Activated B cell treated with CpG ODN at 0.5 μM for 24 hours (primary cell): ENCODE measurements at regions of chr2 and their contacts with region 1.

Region 1: DNA sequence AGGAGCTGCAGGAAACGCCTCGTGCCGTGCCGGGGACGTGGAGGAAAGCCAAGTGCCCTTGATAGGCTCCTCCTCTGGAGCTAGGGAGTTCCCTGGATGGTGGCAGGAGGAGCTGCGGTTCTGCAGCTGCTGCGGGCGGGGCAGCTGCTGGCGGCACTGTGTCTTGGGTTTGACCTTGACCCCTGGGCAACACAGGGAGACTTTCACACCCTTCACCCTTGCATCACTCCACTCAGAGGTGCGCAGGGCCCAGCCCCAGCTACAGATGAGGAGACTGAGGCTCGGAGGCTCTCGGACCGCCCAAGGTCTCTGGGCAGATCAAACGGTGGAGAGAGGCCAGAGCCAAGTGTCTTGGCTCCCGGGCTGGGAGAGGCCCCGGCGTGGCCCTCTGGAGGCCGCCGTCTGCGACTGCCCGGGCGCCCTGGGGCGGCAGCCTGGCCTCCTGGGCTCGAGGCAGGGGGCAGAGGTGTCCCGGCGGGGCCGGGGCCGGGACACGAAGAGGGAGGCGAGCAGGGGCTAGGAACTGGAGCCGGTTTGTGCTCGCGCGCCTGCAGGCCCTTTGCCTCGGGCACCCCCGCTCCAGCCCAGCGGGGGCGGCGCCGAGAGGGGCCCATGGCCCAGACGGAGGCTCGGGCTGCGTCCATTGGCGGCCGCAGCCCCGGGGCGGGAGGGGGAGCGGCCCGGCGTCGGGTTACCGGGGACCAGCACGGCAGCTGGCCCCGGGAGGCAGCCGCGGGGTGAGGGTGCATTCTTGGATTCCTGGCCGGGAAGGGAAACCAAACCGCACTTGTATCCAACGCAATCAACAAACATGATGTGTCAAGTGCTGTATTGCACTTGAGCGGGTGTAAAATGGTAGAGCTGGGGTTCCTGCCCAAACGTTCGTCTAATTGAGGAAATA is 129.6 kb upstream of the SLC1A4 start:
- DNase-seq: peak; percentile 44
- ATAC-seq: peak; percentile 19
- H3K4me3 Mint-ChIP-seq: peak overlapping the region; percentile 76
- H3K27ac Mint-ChIP-seq: peak overlapping the region; percentile 94
- H3K4me1 Mint-ChIP-seq: peaks cover 36% of the 10 kb centered on the region
- H3K27me3 Mint-ChIP-seq: no peaks in the 10 kb centered on the region
- CTCF ChIP-seq: no peak

Region 2: DNA sequence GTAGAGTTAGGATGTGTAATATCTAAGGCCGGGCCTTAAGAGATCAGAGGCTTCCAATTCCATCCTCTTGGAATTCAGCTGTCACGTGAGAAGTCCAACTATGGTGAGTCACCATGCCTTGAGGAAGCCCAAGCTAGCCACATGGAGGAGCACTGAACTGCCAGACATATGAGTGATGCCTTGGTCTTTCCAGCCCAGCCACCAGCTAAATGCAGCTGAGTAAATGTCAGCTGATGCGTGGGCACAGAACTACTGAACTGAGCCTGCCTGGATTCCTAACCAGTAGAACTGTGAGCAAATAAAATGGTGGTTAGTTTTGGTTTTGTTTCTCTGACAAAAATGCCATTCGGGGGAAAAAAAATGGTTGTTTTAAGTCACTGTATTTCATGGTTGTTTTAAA is 52.1 kb before region 1 on chr2:
- CTCF ChIA-PET with region 1: no interaction called
- POLR2A ChIA-PET with region 1: interaction called, 11 read pairs
- intact Hi-C with region 1: no loop called
- DNase-seq: no peak
- ATAC-seq: peak; percentile 47
- H3K4me3 Mint-ChIP-seq: no peak overlapping the region
- H3K27ac Mint-ChIP-seq: no peak overlapping the region
- H3K4me1 Mint-ChIP-seq: peaks cover 14% of the 10 kb centered on the region
- H3K27me3 Mint-ChIP-seq: no peaks in the 10 kb centered on the region
- CTCF ChIP-seq: no peak

Region 3: DNA sequence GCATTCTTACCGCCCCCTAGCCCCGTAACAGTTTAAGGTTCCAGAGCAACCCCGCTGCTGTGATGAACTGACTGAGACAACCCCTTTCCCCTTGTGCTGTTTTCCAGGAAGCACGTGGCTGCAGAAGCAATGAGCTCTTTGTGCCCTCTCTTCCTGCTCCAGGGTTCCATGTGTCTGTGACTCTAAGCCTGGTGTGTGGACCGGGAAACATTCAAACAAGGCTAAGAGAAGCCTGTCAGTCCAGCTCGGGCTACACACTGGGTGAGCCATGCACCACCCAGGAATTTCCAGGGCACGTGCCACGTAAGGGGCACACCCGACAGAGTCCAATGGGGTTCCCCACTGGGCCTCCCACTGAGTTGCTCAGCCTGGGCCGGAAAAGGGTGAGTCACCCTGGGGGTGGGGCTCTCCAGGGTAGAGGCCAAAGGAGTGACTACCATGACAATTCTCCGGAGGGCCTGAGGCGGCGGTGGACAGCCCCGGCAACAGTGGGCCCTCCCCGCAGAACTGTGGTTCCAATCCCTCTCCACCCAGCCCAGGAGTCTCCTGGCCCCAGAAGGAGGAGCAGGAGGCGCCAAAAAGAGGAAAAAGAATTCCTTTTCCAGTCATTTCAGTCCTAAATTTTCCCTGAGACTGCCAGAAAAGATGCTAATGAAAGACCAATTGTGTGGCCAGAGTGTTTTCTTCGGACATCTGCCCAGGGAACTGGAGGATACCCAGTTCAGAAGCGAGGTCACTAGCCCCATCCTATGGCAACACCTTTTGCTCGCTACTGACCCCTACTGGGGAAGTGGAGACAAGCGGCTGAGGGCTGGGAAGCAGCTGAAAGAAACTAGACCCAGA is 28.2 kb before region 1 on chr2:
- CTCF ChIA-PET with region 1: interaction called, 15 read pairs
- POLR2A ChIA-PET with region 1: interaction called, 14 read pairs
- intact Hi-C with region 1: loop called (anchors 1 kb)
- DNase-seq: peak; percentile 75
- ATAC-seq: peak; percentile 96
- H3K4me3 Mint-ChIP-seq: peak overlapping the region; percentile 63
- H3K27ac Mint-ChIP-seq: peak overlapping the region; percentile 82
- H3K4me1 Mint-ChIP-seq: peaks cover 21% of the 10 kb centered on the region
- H3K27me3 Mint-ChIP-seq: no peaks in the 10 kb centered on the region
- CTCF ChIP-seq: no peak

Region 4: DNA sequence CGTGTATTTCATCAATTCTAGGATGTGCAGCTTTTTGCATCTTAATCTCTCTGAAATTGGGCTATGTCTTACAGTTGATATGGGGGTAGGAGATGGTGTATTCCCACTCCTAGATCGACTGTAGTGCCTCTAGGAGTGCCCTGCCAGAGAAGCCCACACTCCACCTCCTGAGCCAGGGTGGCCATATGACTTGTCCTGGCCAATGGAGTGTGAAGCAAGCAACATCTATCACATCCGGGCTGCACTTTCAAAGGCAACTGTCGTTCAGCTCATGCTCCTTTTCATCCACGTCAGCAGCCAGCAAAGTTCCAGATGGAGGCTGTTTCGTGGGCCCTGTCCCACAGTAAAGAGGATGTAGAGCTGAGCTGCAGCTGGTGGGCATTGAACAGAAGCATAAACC is 19.7 kb before region 1 on chr2:
- CTCF ChIA-PET with region 1: interaction called, 11 read pairs
- POLR2A ChIA-PET with region 1: interaction called, 81 read pairs
- intact Hi-C with region 1: loop called (anchors 1 kb)
- DNase-seq: no peak
- ATAC-seq: peak; percentile 92
- H3K4me3 Mint-ChIP-seq: peak overlapping the region; percentile 61
- H3K27ac Mint-ChIP-seq: peak overlapping the region; percentile 92
- H3K4me1 Mint-ChIP-seq: peaks cover 51% of the 10 kb centered on the region
- H3K27me3 Mint-ChIP-seq: no peaks in the 10 kb centered on the region
- CTCF ChIP-seq: no peak

Region 5: DNA sequence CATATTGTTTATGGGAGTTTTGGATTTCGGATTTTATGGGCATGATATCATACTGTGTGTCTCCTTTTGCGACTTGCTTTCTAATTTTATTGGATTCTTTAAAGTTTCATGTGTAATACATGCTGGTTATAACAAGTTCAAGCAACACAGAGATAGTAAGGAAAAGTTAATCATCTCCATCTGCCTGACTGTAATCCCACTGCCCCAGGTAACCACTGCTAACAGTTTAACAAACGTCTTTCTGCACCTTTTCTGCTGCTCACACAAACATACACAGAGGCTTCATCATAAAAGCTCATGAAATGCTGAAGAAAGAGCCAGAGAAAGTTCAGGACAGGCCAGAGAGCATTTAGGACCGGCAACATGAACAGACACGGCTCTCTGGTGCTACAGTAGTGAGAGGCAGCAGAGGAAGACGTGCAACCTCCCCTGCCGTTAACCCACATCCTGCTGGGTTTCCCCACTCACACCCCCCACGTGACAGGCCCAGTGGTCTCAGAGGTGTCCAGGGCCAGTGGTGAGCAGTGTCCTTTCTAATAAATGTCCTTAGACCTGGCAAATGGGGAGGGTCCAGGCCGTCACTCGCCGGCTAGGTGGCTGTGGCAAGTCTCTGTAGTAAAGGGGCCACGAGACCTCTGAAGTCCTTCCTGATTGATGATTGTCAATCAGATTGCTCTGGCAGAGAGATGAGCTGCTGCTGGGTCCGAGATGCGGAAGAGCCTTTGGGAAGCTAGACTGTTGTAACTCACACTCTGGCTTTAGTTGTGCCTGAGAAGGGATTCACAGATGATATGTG is 86.6 kb after region 1 on chr2:
- CTCF ChIA-PET with region 1: no interaction called
- POLR2A ChIA-PET with region 1: no interaction called
- intact Hi-C with region 1: no loop called
- DNase-seq: peak; percentile 61
- ATAC-seq: peak; percentile 93
- H3K4me3 Mint-ChIP-seq: peak overlapping the region; percentile 78
- H3K27ac Mint-ChIP-seq: peak overlapping the region; percentile 93
- H3K4me1 Mint-ChIP-seq: peaks cover 69% of the 10 kb centered on the region
- H3K27me3 Mint-ChIP-seq: no peaks in the 10 kb centered on the region
- CTCF ChIP-seq: no peak